Psoas muscle (tissue), 8 donors: ENCODE measurements at regions of chr1 and their contacts with region 1.

Region 1: GRCh38 chr1:207316622-207317391 is 4.7 kb upstream of the CD55 start:
- DNase-seq: no peak
- ATAC-seq: no peak
- H3K4me3 ChIP-seq: no peak overlapping the region
- H3K27ac ChIP-seq: peak overlapping the region; percentile 69
- H3K4me1 ChIP-seq: peaks cover 28% of the 10 kb centered on the region
- H3K27me3 ChIP-seq: no peaks in the 10 kb centered on the region
- CTCF ChIP-seq: no peak

Region 2: DNA sequence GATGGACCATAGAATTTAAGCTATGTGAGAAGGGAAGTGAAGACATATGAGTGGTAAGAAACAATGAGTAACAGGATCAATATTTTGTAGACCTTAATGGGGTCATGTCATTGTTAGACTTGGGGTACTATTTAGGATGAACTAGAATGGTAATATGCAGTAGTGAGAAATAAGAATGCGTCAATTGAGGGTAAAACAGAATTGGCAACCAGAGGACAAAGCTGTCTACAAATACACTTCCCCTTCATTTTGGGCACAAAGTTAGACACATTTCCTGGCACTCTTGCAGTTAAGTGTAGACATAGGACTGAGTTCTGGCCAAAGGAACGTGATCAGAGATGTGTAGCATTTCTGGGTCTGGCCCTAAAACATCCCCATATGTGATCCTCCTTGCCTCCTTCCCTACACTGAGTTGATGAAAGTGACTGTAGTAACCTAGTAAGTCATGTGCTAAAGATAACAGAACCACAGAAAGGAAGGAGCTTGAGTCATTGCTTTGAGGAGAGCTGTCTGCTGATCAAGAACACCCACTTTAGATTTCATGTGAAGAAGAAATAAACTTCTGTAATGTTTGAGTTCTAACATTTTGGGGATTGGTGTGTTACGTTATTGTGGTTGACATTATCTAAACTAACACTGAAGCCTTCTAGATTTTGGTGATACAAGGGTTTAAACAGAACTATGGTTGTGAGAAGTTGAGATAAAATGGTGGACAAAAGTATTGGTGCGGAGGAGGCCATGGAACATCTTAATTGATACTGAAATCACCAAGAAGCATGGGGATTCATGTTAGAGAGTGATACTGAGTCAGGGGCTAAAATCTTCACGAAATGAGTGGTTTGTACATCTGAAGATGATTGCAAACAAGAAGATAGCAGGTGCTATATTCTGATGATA is 46.4 kb after region 1 on chr1:
- intact Hi-C with region 1: loop called in 1 of 2 experiments (anchors 5 kb)
- DNase-seq: no peak
- ATAC-seq: peak; percentile 57 to 81 (median 70)
- H3K4me3 ChIP-seq: no peak overlapping the region
- H3K27ac ChIP-seq: no peak overlapping the region
- H3K4me1 ChIP-seq: peaks cover 11% of the 10 kb centered on the region
- H3K27me3 ChIP-seq: no peaks in the 10 kb centered on the region
- CTCF ChIP-seq: no peak